ENCODE measurements at regions of chr1 and their contacts with region 1.

Region 1: GRCh38 chr1:76229279-76230005 is 154.9 kb downstream of the ST6GALNAC3 start:
- DNase-seq: no peak
- H3K4me3 ChIP-seq: no peak overlapping the region
- H3K27ac ChIP-seq: no peak overlapping the region
- H3K4me1 ChIP-seq: no peaks in the 10 kb centered on the region
- H3K27me3 ChIP-seq: no peaks in the 10 kb centered on the region
- CTCF ChIP-seq: no peak
- POLR2A ChIP-seq: no peak

Region 2: DNA sequence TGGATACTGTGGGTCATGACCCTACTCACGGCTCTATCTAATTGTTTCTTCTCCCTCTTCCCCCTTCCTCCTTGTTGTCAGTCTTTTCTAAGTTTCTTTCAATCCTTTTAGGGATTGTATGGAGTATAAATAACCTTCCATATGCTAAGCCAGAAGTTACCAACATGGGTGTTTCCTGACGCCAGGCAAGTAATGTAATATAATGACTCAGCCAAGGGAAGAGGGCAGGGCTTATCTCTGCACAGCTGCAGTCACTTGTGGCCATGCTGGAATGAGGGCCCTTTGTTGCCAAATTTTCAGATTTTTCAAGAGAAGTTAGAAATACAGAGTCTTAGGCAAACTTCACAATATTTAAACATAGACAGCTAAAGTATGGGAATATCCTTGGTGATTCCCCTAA is 39.7 kb after region 1 on chr1:
- intact Hi-C with region 1: loop called (anchors 2 kb)
- DNase-seq: no peak
- H3K4me3 ChIP-seq: no peak overlapping the region
- H3K27ac ChIP-seq: no peak overlapping the region
- H3K4me1 ChIP-seq: no peaks in the 10 kb centered on the region
- H3K27me3 ChIP-seq: no peaks in the 10 kb centered on the region
- CTCF ChIP-seq: no peak
- POLR2A ChIP-seq: no peak